ENCODE measurements at regions of chr21 and their contacts with region 1.

Region 1: GRCh38 chr21:17387030-17387617 is 125.7 kb upstream of the CXADR start:
- DNase-seq: peak; percentile 36
- H3K27ac ChIP-seq: no peak overlapping the region
- CTCF ChIP-seq: peak; percentile 76

Region 2: DNA sequence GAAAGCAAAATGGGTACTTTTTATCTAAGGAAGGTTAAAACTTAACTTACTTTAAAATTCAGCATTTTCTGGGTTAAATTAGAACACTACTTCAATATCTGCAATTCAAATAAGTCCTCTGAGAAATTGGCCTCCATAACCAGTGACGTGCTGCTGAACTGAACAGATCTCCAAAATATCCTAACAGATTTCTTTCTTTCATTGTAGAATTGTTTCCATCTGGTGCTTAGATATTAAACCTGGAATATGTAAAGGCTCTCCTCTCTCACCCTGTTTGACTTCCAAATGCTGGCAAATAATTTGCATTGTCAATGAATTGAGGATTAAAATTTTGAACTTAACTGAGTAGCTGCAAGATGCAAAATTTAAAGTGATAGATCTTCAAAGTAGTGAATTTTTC is 191.1 kb before region 1 on chr21:
- CTCF ChIA-PET with region 1: no interaction called
- POLR2A ChIA-PET with region 1: no interaction called
- DNase-seq: no peak
- H3K27ac ChIP-seq: no peak overlapping the region
- CTCF ChIP-seq: no peak

Region 3: GRCh38 chr21:17554679-17555465 is 167.7 kb after region 1 on chr21:
- CTCF ChIA-PET with region 1: interaction called, 14 read pairs
- POLR2A ChIA-PET with region 1: no interaction called
- DNase-seq: peak; percentile 43
- H3K27ac ChIP-seq: no peak overlapping the region
- CTCF ChIP-seq: peak; percentile 24

Region 4: GRCh38 chr21:17585875-17586450 is 198.8 kb after region 1 on chr21:
- CTCF ChIA-PET with region 1: interaction called, 20 read pairs
- POLR2A ChIA-PET with region 1: no interaction called
- DNase-seq: peak; percentile 28
- H3K27ac ChIP-seq: no peak overlapping the region
- CTCF ChIP-seq: peak; percentile 69